Activated CD8-positive, alpha-beta T cell treated with anti-CD3 and anti-CD28 coated beads, Interleukin-2, amount 10 ng/mL, durations not matched to agents 7 days and 5 days (primary cell): ENCODE measurements at regions of chr1 and their contacts with region 1.

Region 1: GRCh38 chr1:111222308-111223125 is 5.0 kb upstream of the CHI3L2 start:
- DNase-seq: peak; percentile 88
- ATAC-seq: peak; percentile 43
- H3K4me3 Mint-ChIP-seq: peak overlapping the region; percentile 65
- H3K27ac Mint-ChIP-seq: peak overlapping the region; percentile 89
- H3K4me1 Mint-ChIP-seq: peaks cover 93% of the 10 kb centered on the region
- H3K27me3 Mint-ChIP-seq: no peaks in the 10 kb centered on the region

Region 2: DNA sequence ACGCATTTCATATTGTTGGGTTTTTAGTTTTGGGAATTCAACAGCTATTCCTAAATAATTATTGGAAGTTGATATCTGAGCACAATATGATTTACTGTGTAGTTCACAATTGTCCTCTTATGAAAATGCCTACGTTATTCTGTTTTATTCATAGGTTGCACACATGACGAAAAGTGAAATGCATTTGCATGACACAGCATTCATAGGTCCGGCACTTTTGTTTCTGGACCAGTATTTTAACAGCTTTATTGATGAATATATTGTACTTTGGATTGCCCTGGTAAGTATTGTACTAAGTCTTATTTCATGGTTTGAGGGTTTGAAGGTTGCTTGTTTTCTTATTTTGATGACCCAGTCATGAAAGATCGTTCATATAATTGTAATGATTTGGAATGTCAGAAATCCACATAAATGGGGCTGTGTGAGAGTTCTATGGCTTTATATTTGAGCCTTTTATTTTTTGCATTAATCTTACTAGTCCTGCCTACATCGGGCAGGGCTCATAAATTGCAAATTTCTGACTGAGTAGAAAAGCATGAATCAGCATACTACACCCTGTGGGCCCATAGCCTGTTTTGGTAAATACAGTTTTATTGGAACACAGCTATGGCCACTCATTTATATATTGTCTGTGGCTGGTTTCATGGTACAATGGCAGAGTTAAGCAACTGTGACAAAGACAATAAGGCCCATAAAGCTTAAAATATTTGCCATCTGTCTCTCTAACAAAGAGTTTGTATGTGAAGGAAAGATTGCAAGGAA is 39.0 kb before region 1 on chr1:
- CTCF ChIA-PET with region 1: interaction called, 13 read pairs
- POLR2A ChIA-PET with region 1: interaction called, 10 read pairs
- DNase-seq: no peak
- ATAC-seq: no peak
- H3K4me3 Mint-ChIP-seq: no peak overlapping the region
- H3K27ac Mint-ChIP-seq: peak overlapping the region; percentile 56
- H3K4me1 Mint-ChIP-seq: peaks cover 35% of the 10 kb centered on the region
- H3K27me3 Mint-ChIP-seq: no peaks in the 10 kb centered on the region

Region 3: DNA sequence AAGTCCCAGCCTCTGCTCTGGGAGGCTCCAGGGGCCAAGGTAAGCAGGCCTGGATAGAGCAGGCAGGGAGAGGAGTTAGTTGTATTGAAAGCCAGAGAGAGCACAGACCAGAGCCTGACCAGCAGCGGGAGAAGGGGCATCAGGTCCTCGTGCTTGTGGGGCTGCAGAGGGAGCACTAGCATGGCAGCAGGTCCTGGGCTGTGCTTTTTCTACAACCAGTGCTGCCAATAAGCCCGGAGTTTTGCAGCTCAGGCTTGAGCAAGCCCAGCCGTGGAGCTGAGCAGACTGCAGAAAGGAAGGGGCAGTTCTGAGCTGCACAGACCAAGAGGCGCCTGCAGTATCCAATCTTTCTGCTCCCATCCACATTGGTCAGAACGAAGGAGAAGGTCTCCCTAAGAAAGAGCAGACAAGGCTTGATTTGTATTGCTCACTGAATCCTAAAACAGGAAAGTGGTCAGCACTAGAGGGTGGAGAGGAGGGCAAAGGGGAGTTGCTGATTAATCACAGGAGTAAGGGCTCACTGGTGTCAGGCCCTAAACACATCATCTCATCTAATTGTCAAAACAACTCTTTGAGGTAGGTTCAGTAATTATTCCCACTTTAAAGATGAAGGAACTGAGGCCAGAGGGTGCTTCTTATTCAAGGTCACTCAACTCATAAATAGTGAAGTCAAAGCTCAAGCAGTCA is 24.8 kb before region 1 on chr1:
- CTCF ChIA-PET with region 1: interaction called, 528 read pairs
- POLR2A ChIA-PET with region 1: interaction called, 570 read pairs
- DNase-seq: peak; percentile 76
- ATAC-seq: peak; percentile 46
- H3K4me3 Mint-ChIP-seq: peak overlapping the region; percentile 99
- H3K27ac Mint-ChIP-seq: peak overlapping the region; percentile 99
- H3K4me1 Mint-ChIP-seq: peaks cover 62% of the 10 kb centered on the region
- H3K27me3 Mint-ChIP-seq: no peaks in the 10 kb centered on the region

Region 4: GRCh38 chr1:111203681-111204200 is 18.8 kb before region 1 on chr1:
- CTCF ChIA-PET with region 1: interaction called, 528 read pairs
- POLR2A ChIA-PET with region 1: interaction called, 570 read pairs
- DNase-seq: peak; percentile 94
- ATAC-seq: peak; percentile 51
- H3K4me3 Mint-ChIP-seq: peak overlapping the region; percentile 99
- H3K27ac Mint-ChIP-seq: peak overlapping the region; percentile 99
- H3K4me1 Mint-ChIP-seq: peaks cover 69% of the 10 kb centered on the region
- H3K27me3 Mint-ChIP-seq: no peaks in the 10 kb centered on the region

Region 5: GRCh38 chr1:111334169-111334568 is 111.7 kb after region 1 on chr1:
- CTCF ChIA-PET with region 1: interaction called, 19 read pairs
- POLR2A ChIA-PET with region 1: no interaction called
- DNase-seq: peak; percentile 66
- ATAC-seq: peak; percentile 76
- H3K4me3 Mint-ChIP-seq: no peak overlapping the region
- H3K27ac Mint-ChIP-seq: no peak overlapping the region
- H3K4me1 Mint-ChIP-seq: peaks cover 2% of the 10 kb centered on the region
- H3K27me3 Mint-ChIP-seq: peaks cover 2% of the 10 kb centered on the region

Region 6: GRCh38 chr1:111399792-111400610 is 177.5 kb after region 1 on chr1:
- CTCF ChIA-PET with region 1: interaction called, 36 read pairs
- POLR2A ChIA-PET with region 1: no interaction called
- DNase-seq: peak; percentile 63
- ATAC-seq: no peak
- H3K4me3 Mint-ChIP-seq: no peak overlapping the region
- H3K27ac Mint-ChIP-seq: no peak overlapping the region
- H3K4me1 Mint-ChIP-seq: peaks cover 4% of the 10 kb centered on the region
- H3K27me3 Mint-ChIP-seq: peaks cover 41% of the 10 kb centered on the region

Region 7: DNA sequence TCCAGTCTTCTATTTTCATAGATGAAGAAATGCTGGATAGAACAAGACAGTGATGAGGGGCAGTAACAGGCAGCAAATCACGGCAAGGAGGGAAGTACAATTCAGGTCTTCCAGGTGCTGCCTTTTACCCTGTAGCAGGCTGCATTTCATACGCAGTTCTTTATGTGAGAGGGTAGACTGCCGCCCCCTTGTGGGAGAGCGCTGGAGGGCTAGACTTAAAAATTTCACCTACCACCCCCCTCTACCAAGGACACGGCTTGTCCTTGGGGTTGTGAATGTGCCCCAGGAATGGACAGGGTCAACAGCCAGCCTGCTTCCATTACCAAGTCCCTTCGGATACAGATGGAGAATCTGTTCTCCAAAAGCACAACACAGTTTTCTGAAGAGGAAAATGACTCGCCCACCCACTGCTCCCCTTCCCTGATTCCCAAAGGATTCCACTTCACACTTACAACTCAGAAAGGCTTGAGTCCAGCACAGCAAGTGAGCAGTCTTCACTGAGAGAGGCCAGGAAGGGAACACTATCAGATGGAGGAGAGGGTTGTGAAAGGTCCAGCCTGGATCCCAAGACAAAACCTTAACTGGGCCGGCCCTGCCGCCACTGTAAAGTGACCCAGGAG is 219.2 kb after region 1 on chr1:
- CTCF ChIA-PET with region 1: interaction called, 16 read pairs
- POLR2A ChIA-PET with region 1: no interaction called
- DNase-seq: peak; percentile 78
- ATAC-seq: peak; percentile 80
- H3K4me3 Mint-ChIP-seq: no peak overlapping the region
- H3K27ac Mint-ChIP-seq: peak overlapping the region; percentile 56
- H3K4me1 Mint-ChIP-seq: peaks cover 48% of the 10 kb centered on the region
- H3K27me3 Mint-ChIP-seq: no peaks in the 10 kb centered on the region